GM12878 (cell line): ENCODE measurements at regions of chr1 and their contacts with region 1.

Region 1: GRCh38 chr1:207797229-207797961 is 45.5 kb downstream of the CD46 start:
- DNase-seq: peak; percentile 38
- ATAC-seq: peak; percentile 84
- H3K4me3 ChIP-seq: no peak overlapping the region
- H3K27ac ChIP-seq: no peak overlapping the region
- H3K4me1 ChIP-seq: peaks cover 15% of the 10 kb centered on the region
- H3K27me3 ChIP-seq: no peaks in the 10 kb centered on the region
- CTCF ChIP-seq: peak; percentile 78 to 83 (median 80)
- EP300 ChIP-seq: no peak
- POLR2A ChIP-seq: no peak
- RAD21 ChIP-seq: peak; percentile 71

Region 2: GRCh38 chr1:207309775-207310273 is 487.6 kb before region 1 on chr1:
- CTCF ChIA-PET with region 1: no interaction called
- POLR2A ChIA-PET with region 1: no interaction called
- RAD21 ChIA-PET with region 1: no interaction called
- SMC1A ChIA-PET with region 1: no interaction called
- in situ Hi-C with region 1: no loop called
- intact Hi-C with region 1: no loop called
- DNase-seq: no peak
- ATAC-seq: peak; percentile 74
- H3K4me3 ChIP-seq: no peak overlapping the region
- H3K27ac ChIP-seq: no peak overlapping the region
- H3K4me1 ChIP-seq: no peaks in the 10 kb centered on the region
- H3K27me3 ChIP-seq: no peaks in the 10 kb centered on the region
- CTCF ChIP-seq: no peak
- EP300 ChIP-seq: no peak
- POLR2A ChIP-seq: no peak
- RAD21 ChIP-seq: no peak

Region 3: GRCh38 chr1:207579436-207579799 is 218.0 kb before region 1 on chr1:
- CTCF ChIA-PET with region 1: interaction called, 25 read pairs
- POLR2A ChIA-PET with region 1: no interaction called
- RAD21 ChIA-PET with region 1: interaction called, 8 read pairs
- SMC1A ChIA-PET with region 1: interaction called, 19 read pairs
- in situ Hi-C with region 1: no loop called
- intact Hi-C with region 1: loop called (anchors 10 kb)
- DNase-seq: peak; percentile 17
- ATAC-seq: peak; percentile 99
- H3K4me3 ChIP-seq: no peak overlapping the region
- H3K27ac ChIP-seq: no peak overlapping the region
- H3K4me1 ChIP-seq: no peaks in the 10 kb centered on the region
- H3K27me3 ChIP-seq: no peaks in the 10 kb centered on the region
- CTCF ChIP-seq: peak; percentile 49 to 60 (median 55); a peak in 5 of 6 replicates
- EP300 ChIP-seq: no peak
- POLR2A ChIP-seq: no peak
- RAD21 ChIP-seq: peak; percentile 58

Region 4: DNA sequence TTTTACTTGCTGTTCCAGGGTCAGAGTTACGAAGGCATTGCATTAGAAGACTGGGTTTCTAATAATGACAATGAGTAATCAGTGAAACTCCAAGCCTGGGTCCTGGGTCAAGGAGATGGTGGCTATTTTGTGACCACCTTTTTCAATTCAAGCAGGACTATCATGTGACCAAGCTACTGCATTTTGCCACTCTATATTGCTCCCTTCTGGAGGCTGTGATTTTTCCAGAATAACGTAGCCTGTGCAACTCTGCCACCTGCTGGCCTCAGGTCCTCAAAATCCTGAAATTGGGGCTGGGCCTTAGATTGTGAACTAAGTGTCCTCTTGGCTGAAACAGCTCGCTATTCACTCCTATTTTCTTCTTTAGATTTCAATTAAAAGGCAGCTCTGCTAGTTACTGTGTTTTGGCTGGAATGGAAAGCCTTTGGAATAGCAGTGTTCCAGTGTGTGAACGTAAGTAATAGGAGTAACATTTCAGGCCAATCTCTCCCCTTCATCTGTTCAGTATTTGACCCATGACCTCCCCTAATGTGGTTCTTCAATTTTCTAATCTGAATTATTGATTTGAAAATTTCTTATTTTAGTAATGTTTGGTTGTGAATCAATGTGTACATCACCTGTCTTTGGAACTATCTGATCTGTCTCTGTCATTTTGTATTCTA is 98.4 kb before region 1 on chr1:
- CTCF ChIA-PET with region 1: interaction called, 23 read pairs
- POLR2A ChIA-PET with region 1: no interaction called
- RAD21 ChIA-PET with region 1: interaction called, 11 read pairs
- SMC1A ChIA-PET with region 1: interaction called, 6 read pairs
- in situ Hi-C with region 1: no loop called
- intact Hi-C with region 1: loop called (anchors 5 kb)
- DNase-seq: no peak
- ATAC-seq: peak; percentile 80
- H3K4me3 ChIP-seq: no peak overlapping the region
- H3K27ac ChIP-seq: no peak overlapping the region
- H3K4me1 ChIP-seq: no peaks in the 10 kb centered on the region
- H3K27me3 ChIP-seq: no peaks in the 10 kb centered on the region
- CTCF ChIP-seq: peak; percentile 53 to 62 (median 55)
- EP300 ChIP-seq: no peak
- POLR2A ChIP-seq: no peak
- RAD21 ChIP-seq: peak; percentile 61

Region 5: GRCh38 chr1:207751790-207752455 is 45.5 kb before region 1 on chr1 and contains the start of gene CD46:
- CTCF ChIA-PET with region 1: interaction called, 29 read pairs
- POLR2A ChIA-PET with region 1: interaction called, 3 read pairs
- RAD21 ChIA-PET with region 1: interaction called, 9 read pairs
- SMC1A ChIA-PET with region 1: interaction called, 22 read pairs
- in situ Hi-C with region 1: no loop called
- intact Hi-C with region 1: no loop called
- DNase-seq: peak; percentile 81
- ATAC-seq: peak; percentile 96
- H3K4me3 ChIP-seq: peak within 1 kb of the TSS; percentile 84
- H3K27ac ChIP-seq: peak within 1 kb of the TSS; percentile 86
- H3K4me1 ChIP-seq: peaks cover 11% of the 10 kb centered on the region
- H3K27me3 ChIP-seq: no peaks in the 10 kb centered on the region
- CTCF ChIP-seq: no peak
- EP300 ChIP-seq: no peak
- POLR2A ChIP-seq: peak; percentile 81
- RAD21 ChIP-seq: no peak
- polyA plus RNA-seq, gene CD46: 61.1 to 62.7 TPM

Region 6: DNA sequence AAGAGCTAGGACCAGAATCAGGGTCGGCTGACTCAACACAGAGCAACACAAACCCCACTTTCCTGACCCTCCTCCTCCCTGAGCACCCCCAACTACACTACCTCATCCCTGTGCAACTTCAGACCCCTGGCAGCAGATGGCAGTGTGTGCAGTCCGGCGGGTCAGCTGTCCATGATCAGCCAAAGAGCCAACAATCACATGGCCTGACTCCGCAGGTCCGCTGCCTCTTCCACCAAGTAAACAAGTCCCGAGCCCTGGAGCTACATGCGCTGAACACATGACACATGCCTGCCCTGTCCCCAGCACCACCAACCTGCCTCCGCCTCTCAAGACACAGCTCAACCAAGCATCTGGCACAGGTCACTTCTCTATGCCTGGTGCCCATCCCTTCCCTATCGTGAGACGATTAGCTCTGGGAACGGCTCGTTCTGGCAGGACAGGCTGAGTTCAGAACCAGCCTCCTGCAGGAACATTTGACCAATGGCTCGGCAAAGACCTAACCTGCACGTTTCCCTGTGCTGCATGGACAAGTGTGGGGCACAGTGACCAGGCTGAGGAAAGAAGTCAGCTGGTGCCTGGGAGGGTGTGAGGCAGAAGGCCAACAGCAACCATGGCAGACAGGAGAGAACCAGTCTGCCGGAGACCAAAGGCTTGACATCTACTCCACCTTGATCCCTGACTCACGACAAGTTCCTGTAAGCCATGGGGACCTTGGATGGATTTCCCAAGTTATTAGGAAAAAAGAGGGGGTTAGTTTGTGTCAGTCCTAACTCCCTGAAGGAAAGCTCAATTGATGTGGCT is 14.7 kb after region 1 on chr1:
- CTCF ChIA-PET with region 1: interaction called, 29 read pairs
- POLR2A ChIA-PET with region 1: interaction called, 8 read pairs
- RAD21 ChIA-PET with region 1: interaction called, 7 read pairs
- SMC1A ChIA-PET with region 1: interaction called, 6 read pairs
- in situ Hi-C with region 1: no loop called
- intact Hi-C with region 1: no loop called
- DNase-seq: no peak
- ATAC-seq: peak; percentile 53
- H3K4me3 ChIP-seq: no peak overlapping the region
- H3K27ac ChIP-seq: no peak overlapping the region
- H3K4me1 ChIP-seq: peaks cover 26% of the 10 kb centered on the region
- H3K27me3 ChIP-seq: no peaks in the 10 kb centered on the region
- CTCF ChIP-seq: peak; percentile 50 to 60 (median 56)
- EP300 ChIP-seq: no peak
- POLR2A ChIP-seq: peak; percentile 37; the same call in 1 of the 2 replicates
- RAD21 ChIP-seq: peak; percentile 55

Region 7: DNA sequence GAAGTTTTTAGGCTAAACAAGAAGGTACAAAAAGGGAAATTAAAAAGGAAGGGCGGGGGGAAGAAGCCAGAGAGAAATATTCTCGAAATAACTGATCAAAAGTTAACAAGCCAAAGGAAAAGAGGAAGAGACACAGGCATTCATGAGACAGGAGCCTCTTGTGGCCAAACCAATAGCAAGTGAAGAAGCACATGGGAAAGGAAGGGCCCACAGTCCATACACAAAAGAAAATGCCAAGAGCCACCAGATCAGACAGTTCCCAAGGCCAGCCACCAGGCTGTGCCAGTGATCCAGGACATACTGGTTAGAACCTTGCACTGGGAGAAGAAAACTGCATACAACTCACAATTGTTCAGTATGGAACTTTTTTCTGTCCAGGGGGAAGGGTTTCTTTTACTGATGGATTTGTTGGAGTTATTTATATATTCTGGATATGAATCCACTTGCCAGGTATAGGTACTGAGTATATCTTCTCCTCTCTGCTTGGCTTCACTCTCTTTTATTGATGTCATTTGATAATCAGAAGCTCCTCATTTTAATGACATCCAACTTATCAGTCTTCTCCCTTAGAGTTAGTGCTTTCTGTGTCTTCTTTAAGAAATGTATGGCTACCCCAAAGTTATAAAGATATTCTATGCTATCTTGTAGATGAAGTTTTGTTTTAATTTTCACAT is 31.2 kb after region 1 on chr1:
- CTCF ChIA-PET with region 1: interaction called, 45 read pairs
- POLR2A ChIA-PET with region 1: interaction called, 8 read pairs
- RAD21 ChIA-PET with region 1: interaction called, 13 read pairs
- SMC1A ChIA-PET with region 1: interaction called, 16 read pairs
- in situ Hi-C with region 1: no loop called
- intact Hi-C with region 1: no loop called
- DNase-seq: peak; percentile 81
- ATAC-seq: peak; percentile 37
- H3K4me3 ChIP-seq: no peak overlapping the region
- H3K27ac ChIP-seq: peak overlapping the region; percentile 10
- H3K4me1 ChIP-seq: peaks cover 64% of the 10 kb centered on the region
- H3K27me3 ChIP-seq: no peaks in the 10 kb centered on the region
- CTCF ChIP-seq: peak; percentile 83 to 95 (median 93)
- EP300 ChIP-seq: no peak
- POLR2A ChIP-seq: no peak
- RAD21 ChIP-seq: peak; percentile 96

Region 8: GRCh38 chr1:207868774-207869721 is 71.7 kb after region 1 on chr1:
- CTCF ChIA-PET with region 1: interaction called, 34 read pairs
- POLR2A ChIA-PET with region 1: interaction called, 5 read pairs
- RAD21 ChIA-PET with region 1: interaction called, 14 read pairs
- SMC1A ChIA-PET with region 1: interaction called, 16 read pairs
- in situ Hi-C with region 1: no loop called
- intact Hi-C with region 1: no loop called
- DNase-seq: no peak
- ATAC-seq: peak; percentile 82
- H3K4me3 ChIP-seq: peak overlapping the region; percentile 97
- H3K27ac ChIP-seq: peak overlapping the region; percentile 77
- H3K4me1 ChIP-seq: peaks cover 55% of the 10 kb centered on the region
- H3K27me3 ChIP-seq: no peaks in the 10 kb centered on the region
- CTCF ChIP-seq: peak; percentile 70 to 83 (median 81)
- EP300 ChIP-seq: no peak; a peak in 1 of 4 replicates
- POLR2A ChIP-seq: peak; percentile 64; the same call in 1 of the 2 replicates
- RAD21 ChIP-seq: peak; percentile 62

Region 9: GRCh38 chr1:208919371-208919770 is 1122.0 kb after region 1 on chr1:
- CTCF ChIA-PET with region 1: no interaction called
- POLR2A ChIA-PET with region 1: no interaction called
- RAD21 ChIA-PET with region 1: no interaction called
- SMC1A ChIA-PET with region 1: no interaction called
- in situ Hi-C with region 1: no loop called
- intact Hi-C with region 1: no loop called
- DNase-seq: no peak
- ATAC-seq: no peak
- H3K4me3 ChIP-seq: no peak overlapping the region
- H3K27ac ChIP-seq: no peak overlapping the region
- H3K4me1 ChIP-seq: no peaks in the 10 kb centered on the region
- H3K27me3 ChIP-seq: no peaks in the 10 kb centered on the region
- CTCF ChIP-seq: no peak
- EP300 ChIP-seq: no peak
- POLR2A ChIP-seq: no peak
- RAD21 ChIP-seq: no peak